PC-9 (cell line): ENCODE measurements at regions of chr20 and their contacts with region 1.

Region 1: GRCh38 chr20:57346477-57346876 is 4.6 kb upstream of the RAE1 start:
- DNase-seq: peak; percentile 70 to 73
- H3K4me3 ChIP-seq: no peak overlapping the region
- H3K27ac ChIP-seq: no peak overlapping the region
- H3K4me1 ChIP-seq: peaks cover 10% of the 10 kb centered on the region; the same call in 1 of the 2 replicates
- H3K27me3 ChIP-seq: no peaks in the 10 kb centered on the region
- CTCF ChIP-seq: peak; percentile 93

Region 2: DNA sequence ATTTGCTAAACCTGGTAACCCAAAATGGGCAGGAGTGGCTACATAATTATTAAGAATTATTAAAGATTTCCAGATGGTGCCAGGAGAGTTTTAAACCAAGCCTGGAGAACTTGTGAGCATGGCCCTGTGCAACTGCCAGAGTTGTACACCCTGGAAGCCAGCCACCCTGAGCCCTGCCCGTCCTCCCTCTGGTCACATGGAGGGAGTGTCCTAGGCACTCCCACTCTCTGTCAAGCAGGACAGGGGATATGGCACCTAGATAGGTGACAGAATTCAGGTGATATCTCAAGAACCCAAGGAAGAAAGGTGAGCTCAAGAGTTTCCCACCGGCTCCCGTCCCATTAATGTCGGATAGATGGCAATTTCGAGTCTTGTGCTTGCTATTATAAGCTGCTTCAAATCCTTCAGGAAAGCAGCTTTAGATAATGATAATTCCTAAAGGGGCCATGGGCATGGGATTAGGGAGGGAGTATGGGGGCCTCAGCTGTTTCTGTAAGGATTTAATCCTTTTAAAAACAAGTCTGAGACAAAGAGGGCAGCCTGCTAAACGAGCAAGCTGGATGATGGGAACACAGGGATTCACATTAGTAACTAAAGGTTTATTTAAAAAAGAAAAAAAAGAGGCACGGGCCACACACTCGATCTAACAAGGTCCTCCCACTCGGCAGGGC is 249.1 kb before region 1 on chr20:
- CTCF ChIA-PET with region 1: no interaction called
- POLR2A ChIA-PET with region 1: no interaction called
- intact Hi-C with region 1: no loop called
- DNase-seq: no peak
- H3K4me3 ChIP-seq: no peak overlapping the region
- H3K27ac ChIP-seq: no peak overlapping the region
- H3K4me1 ChIP-seq: no peaks in the 10 kb centered on the region
- H3K27me3 ChIP-seq: peaks cover 58% of the 10 kb centered on the region
- CTCF ChIP-seq: no peak

Region 3: DNA sequence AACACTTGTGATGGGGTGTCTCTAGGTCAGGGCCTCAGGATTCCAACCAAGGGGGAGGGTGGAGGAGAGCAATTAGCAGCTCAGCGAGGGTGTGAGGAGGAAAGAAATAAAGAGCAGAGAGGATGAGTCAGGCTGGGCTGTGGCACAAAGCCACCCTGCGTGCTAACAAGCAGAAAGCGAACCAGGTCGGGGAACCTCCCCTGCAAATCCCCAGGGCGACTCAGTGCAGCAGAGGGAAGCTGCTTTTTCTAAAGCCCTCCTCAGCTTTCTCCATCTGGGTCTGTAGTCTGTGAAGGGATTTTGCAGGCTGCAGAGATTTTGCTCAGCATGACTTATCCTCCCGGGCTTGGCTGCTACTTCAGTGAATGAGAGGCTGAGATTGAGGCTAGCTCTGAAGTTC is 23.4 kb before region 1 on chr20:
- CTCF ChIA-PET with region 1: interaction called, 3 read pairs
- POLR2A ChIA-PET with region 1: no interaction called
- intact Hi-C with region 1: loop called (anchors 1 kb)
- DNase-seq: peak; percentile 74 to 85
- H3K4me3 ChIP-seq: no peak overlapping the region
- H3K27ac ChIP-seq: peak overlapping the region; percentile 20; the same call in 1 of the 2 replicates
- H3K4me1 ChIP-seq: peaks cover 40% of the 10 kb centered on the region
- H3K27me3 ChIP-seq: no peaks in the 10 kb centered on the region
- CTCF ChIP-seq: no peak